HAP-1 (cell line): ENCODE measurements at regions of chr5 and their contacts with region 1.

Region 1: DNA sequence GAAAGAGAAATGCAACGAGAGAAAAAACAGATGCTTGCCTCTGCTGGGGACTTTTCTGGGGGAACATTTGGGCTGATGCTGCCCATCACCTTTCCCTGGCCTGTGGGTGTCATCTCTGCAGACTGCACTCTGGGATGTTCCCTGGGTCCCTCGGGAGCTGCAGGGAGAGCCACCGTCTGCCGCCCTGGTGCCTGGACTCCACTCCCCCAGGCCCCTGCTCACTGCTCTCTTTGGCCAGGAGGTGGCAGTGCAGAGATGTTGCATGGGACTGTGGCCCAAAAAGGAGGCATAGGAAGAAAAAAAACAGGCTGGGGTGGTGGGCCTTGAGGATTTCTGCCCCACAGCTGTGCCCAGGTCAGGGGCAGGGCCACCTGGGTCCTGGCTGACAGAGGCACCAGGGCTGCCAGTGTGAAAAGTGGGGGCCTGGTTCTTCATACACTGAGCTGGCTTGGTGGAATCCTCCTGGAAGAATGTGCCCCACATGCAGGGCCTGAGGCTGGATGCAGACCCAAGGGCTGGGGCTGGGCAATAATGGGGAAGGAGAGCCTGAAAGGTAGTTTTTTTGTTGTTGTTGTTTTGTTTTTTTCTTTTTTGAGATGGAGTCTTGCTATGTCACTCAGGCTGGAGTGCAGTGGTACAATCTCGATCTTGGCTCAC is 353.6 kb downstream of the SLIT3 start:
- DNase-seq: peak; percentile 82 to 93
- H3K4me3 ChIP-seq: no peak overlapping the region
- H3K4me1 ChIP-seq: peaks cover 46% of the 10 kb centered on the region
- H3K27me3 ChIP-seq: no peaks in the 10 kb centered on the region

Region 2: GRCh38 chr5:168747987-168748777 is 199.2 kb before region 1 on chr5:
- in situ Hi-C with region 1: loop called (anchors 10 kb)
- DNase-seq: peak; percentile 42 to 86
- H3K4me3 ChIP-seq: no peak overlapping the region
- H3K4me1 ChIP-seq: no peaks in the 10 kb centered on the region
- H3K27me3 ChIP-seq: no peaks in the 10 kb centered on the region

Region 3: DNA sequence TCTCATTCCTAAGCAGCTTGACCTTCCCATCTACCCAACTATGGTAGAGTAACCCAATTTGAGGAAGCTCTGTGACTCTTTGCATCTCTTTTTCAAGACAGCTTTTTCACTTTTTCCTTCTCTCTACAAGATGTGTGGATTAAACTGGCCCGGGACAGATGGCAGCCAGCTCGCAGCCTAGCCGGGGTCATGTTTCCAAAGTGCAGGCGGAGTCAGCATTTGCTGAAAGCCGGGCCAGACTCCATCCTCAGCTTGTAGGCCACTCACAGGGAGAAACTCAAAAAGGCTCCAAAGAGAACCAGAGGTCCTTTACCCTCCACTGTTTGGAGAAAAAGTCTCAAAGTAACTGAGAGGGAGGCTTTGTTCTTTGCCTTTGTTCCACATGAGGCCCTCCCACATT is 81.4 kb before region 1 on chr5:
- in situ Hi-C with region 1: no loop called
- DNase-seq: peak in 1 of 2 experiments; percentile 43
- H3K4me3 ChIP-seq: no peak overlapping the region
- H3K4me1 ChIP-seq: peaks cover 4% of the 10 kb centered on the region
- H3K27me3 ChIP-seq: no peaks in the 10 kb centered on the region

Region 4: DNA sequence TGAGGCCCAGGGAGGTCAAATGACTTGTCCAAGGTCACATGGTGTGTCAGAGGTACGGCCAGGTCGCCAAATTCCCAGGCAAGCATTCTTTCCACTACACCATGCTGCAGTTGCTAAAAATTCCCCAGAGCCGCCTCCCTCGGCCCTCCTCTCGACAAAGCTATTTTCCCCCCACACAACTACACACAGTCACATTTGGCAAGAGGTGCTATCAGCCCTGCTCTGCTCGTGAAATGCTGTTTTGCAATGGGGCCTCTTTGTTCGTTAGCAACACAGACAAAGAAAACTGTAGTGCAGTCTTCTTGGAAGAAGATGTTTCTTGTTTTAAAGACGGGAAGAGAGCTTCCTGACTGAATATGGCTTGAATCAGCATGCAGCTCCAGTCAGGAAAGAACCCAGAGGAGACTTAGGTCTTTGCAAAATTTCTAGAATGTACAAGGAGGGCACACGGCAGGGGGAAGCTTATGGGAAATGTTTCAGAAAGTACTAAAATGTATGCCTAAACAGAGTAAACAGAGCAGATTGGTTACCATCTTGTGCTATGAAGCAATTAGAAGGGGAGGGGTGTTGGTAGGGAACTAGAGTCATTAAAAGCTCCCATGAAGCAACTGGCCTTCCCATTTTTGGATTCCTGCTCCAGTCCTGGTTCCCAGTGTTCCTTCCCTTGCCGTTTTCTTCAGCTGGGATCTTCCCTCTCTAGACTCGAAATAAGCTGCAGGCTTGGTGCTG is 339.4 kb after region 1 on chr5:
- in situ Hi-C with region 1: no loop called
- DNase-seq: no peak
- H3K4me3 ChIP-seq: no peak overlapping the region
- H3K4me1 ChIP-seq: no peaks in the 10 kb centered on the region
- H3K27me3 ChIP-seq: no peaks in the 10 kb centered on the region

Region 5: DNA sequence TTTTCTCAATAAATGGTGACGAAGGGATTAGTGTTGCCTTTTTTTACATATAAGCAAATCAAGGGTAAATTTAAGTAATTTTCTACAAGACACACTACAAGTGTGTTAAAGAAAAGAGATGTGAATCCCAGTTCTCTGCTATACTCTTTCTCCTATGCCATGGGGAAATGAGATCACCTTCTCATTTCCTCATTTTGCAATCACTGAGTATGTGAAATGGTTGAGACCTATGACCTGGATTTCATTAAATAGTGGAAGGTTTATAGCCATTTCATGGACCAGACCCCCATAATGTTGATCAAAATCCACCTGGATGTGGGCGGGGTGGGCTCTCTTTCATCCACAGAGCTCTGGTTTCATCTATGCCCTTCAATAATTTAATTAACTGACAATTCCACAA is 420.5 kb after region 1 on chr5:
- in situ Hi-C with region 1: no loop called
- DNase-seq: no peak
- H3K4me3 ChIP-seq: no peak overlapping the region
- H3K4me1 ChIP-seq: no peaks in the 10 kb centered on the region
- H3K27me3 ChIP-seq: no peaks in the 10 kb centered on the region; the same call in 1 of the 2 replicates